ENCODE measurements at regions of chr19 and their contacts with region 1.

Region 1: DNA sequence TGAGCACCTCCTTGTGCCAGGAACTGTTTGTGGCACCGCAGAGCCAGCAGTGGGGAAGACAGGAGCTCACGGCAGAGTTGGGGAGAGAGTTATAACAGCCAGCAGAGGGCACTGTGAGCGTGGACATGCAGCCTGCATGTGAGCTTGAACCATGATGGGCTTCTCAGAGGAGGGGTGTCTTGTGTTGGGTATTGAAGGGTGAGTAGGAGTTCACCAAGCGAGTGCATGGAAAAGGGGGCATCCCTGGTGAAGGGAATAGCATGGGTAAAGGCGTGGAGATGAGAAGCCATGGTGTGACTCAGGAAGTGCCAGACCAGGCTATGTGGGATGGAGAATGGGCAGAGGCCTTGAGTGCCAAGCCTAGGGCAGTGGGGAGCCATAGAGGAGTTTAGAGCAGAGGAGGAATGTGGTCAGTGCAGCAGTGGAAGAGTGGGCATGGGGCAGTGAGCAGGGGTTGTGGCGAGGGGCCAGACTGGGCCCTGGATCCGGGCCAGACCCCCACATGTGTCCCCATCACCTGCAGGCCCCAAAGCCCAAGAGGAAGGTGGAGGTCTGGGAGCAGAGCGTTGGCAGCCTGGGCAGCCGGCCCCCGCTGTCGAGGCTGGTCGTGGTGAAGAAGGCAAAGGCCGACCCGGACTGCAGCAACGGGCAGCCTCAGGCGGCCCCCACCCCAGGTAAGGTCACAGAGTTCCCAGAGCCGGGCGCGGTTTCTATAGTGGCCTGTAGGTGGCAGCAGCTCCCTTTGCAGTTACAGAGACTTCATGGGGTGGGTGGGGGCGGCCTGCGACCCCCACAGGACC is 11.8 kb upstream of the SHD start:
- DNase-seq: peak; percentile 78
- CTCF ChIP-seq: peak; percentile 75

Region 2: DNA sequence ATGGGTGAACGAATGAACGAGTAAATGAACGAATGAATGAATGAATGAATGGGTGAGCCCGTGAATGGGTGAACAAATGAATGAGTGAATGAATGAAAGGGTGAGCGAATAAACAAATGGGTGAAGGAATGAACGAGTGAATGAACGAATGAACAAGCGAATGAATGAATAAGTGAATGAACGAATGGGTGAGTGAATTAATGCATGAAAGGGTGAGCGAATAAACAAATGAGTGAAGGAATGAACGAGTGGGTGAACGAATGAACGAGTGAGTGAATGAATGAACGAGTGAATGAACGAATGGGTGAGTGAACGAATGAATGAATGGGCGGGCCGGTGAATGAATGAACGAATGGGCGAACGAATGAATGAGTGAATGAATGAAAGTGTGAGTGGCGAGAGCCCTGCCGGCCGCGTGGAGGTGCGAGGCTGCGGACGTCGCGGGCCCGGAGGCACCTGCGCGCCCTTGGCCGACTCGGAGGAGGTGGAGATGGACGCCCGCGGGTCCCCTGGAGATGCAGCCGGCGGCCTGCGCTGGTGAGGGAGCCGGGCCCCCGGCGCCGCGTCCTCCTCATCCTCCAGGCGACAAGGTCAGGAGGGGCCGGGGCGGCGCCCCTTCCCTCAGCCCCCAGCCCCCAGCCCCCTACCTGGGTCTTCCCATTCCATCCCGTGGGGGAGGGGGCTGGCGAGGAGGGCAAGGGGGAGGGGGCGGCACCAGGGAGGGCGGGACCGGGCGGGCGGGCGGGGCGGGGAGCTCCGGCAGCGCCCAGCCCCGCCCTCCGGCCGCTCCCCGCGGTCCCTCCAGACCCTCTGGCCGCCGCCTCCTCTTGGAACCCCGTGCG is 69.5 kb before region 1 on chr19:
- CTCF ChIA-PET with region 1: no interaction called
- POLR2A ChIA-PET with region 1: no interaction called
- DNase-seq: peak; percentile 57
- CTCF ChIP-seq: no peak

Region 3: DNA sequence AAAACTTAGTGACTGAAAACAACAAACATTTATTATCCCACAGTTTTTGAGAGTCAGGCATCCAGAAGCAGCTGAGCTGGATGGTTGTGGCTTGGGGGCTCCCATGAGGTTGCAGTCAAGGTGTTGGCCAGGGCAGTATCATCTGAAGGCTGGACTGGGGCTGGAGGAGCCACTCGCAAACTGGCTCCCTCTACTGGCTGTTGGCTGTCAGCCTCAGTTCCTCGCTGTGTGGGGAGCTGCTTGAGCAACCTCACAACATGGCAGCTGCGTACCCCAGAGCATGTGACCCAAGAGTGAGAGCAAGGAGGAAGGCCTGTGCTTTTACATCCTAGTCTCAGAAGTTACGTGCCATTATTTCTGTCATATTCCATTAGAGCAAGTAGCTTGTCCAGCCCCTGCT is 10.7 kb before region 1 on chr19:
- CTCF ChIA-PET with region 1: interaction called, 28 read pairs
- POLR2A ChIA-PET with region 1: no interaction called
- DNase-seq: no peak
- CTCF ChIP-seq: peak; percentile 9

Region 4: GRCh38 chr19:4295972-4296771 is 28.9 kb after region 1 on chr19:
- CTCF ChIA-PET with region 1: interaction called, 10 read pairs
- POLR2A ChIA-PET with region 1: no interaction called
- DNase-seq: no peak
- CTCF ChIP-seq: no peak

Region 5: GRCh38 chr19:4342615-4343369 is 75.5 kb after region 1 on chr19:
- CTCF ChIA-PET with region 1: interaction called, 26 read pairs
- POLR2A ChIA-PET with region 1: no interaction called
- DNase-seq: peak; percentile 93
- CTCF ChIP-seq: peak; percentile 6

Region 6: DNA sequence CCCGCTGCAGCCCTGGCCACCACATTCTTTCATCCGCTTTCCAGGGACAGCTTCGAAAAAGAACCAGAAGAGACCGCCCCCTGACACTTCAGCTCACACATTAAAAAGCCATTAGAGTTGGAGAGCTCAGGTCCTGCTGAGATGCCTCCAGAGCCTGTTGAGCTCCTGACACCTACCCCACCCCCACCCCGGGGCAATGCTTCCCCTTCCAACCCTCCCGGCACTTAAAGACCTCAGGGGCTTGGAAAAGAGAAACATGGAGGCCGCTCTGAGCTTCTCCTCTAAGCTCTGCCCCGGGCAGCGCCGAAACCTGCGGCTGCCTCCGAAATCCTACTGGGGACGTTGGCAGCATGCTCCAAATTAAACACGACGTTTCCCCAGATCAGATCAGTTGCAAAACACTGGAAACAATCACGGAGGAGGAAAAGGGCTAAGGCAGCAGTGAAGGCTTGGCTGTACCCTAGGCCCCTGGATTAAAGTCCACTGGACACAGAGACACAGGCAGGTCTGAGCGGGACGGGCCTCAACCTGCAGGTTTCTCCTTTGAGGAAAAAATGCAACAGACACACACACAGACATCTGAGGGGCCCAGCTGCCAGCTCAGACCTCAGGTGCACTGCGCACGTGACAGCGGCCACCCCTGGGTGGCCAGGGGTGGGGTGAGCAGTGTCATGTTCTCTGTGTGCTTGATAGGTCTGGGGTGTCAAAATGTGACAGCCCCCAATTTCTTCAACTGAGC is 123.4 kb after region 1 on chr19:
- CTCF ChIA-PET with region 1: interaction called, 11 read pairs
- POLR2A ChIA-PET with region 1: no interaction called
- DNase-seq: no peak
- CTCF ChIP-seq: no peak

Region 7: DNA sequence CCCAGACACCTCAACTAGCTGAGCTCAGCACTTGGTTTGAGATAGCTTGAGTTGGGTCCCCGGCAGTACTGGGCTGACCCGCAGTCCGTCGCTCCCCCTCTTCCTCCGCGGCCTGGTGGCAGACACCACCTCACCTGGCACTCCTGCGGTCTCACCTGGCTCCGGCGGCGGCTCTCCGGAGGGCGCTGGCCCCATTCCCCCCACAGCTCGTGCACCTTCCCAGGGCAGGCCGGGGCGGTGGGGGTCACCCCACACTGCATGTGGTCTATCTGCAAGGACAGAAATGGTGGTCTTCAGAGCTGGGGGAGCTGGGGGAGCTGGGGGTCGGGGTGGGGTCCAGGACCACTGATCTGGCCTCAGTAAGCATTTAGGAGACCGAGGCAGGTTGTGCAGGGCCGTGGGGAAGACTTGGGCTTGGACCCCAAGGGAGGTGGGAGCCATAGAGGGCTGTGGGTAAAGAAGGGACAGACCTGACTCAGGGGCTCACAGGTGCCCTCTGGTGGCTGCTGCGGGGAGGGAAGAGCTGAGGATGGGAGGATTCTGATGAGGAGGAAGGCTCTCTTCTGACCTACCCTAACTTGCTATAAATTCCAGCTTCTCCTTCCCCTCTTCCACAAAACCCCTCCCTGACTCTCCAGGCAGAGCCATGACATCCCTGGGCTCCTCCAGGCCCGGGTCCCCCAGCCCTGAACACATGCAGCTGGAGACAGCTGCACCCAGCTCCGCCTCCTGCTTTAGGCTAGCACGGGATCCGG is 257.7 kb after region 1 on chr19:
- CTCF ChIA-PET with region 1: interaction called, 58 read pairs
- POLR2A ChIA-PET with region 1: no interaction called
- DNase-seq: peak; percentile 77
- CTCF ChIP-seq: peak; percentile 78

Measured in GM10248 (cell line).